ENCODE measurements at regions of chr11 and their contacts with region 1.

Region 1: GRCh38 chr11:33808228-33808828 is 34.0 kb upstream of the FBXO3 start:
- DNase-seq: peak; percentile 83
- H3K4me3 ChIP-seq: no peak overlapping the region
- H3K27ac ChIP-seq: no peak overlapping the region
- H3K4me1 ChIP-seq: peaks cover 9% of the 10 kb centered on the region
- H3K27me3 ChIP-seq: peaks cover 0 to 5% of the 10 kb centered on the region in 2 experiments
- CTCF ChIP-seq: peak; percentile 87 to 92
- POLR2A ChIP-seq: no peak

Region 2: GRCh38 chr11:33819278-33819677 is 10.9 kb after region 1 on chr11:
- CTCF ChIA-PET with region 1: interaction called, 11 read pairs
- POLR2A ChIA-PET with region 1: no interaction called
- dilution Hi-C with region 1: no loop called
- intact Hi-C with region 1: no loop called
- DNase-seq: no peak
- H3K4me3 ChIP-seq: no peak overlapping the region
- H3K27ac ChIP-seq: no peak overlapping the region
- H3K4me1 ChIP-seq: no peaks in the 10 kb centered on the region
- H3K27me3 ChIP-seq: peaks cover 22 to 24% of the 10 kb centered on the region in 2 experiments
- CTCF ChIP-seq: no peak
- POLR2A ChIP-seq: no peak

Region 3: GRCh38 chr11:33842236-33842915 is 34.0 kb after region 1 on chr11:
- CTCF ChIA-PET with region 1: interaction called, 14 read pairs
- POLR2A ChIA-PET with region 1: no interaction called
- dilution Hi-C with region 1: no loop called
- intact Hi-C with region 1: no loop called
- DNase-seq: no peak
- H3K4me3 ChIP-seq: no peak overlapping the region
- H3K27ac ChIP-seq: no peak overlapping the region
- H3K4me1 ChIP-seq: no peaks in the 10 kb centered on the region
- H3K27me3 ChIP-seq: peaks cover 24 to 27% of the 10 kb centered on the region in 2 experiments
- CTCF ChIP-seq: no peak
- POLR2A ChIP-seq: no peak

Region 4: DNA sequence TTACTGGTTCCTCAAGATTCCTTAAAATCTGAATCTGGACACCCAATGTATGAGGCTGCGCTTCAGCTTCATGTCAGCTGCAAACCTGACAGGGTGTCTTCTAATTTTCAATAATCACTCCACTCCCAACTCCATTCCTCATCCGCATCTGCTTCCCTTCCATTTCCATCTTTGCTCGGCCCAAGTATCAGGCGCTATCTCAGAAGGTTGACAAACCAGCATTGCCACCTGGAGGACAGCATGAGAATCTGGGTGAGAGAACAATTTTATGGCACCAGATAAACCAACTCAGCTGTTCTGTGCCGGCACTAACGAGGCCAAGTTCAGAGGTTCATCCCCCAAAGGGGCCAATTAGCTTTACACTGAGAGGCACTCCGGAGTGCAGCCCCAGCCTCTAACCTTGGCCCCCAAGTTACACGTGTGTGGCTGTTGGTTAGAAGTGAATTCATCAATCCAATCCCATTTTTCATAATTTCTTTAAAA is 162.7 kb after region 1 on chr11:
- CTCF ChIA-PET with region 1: interaction called, 35 read pairs
- POLR2A ChIA-PET with region 1: no interaction called
- dilution Hi-C with region 1: no loop called
- intact Hi-C with region 1: loop called (anchors 1 kb)
- DNase-seq: peak; percentile 72
- H3K4me3 ChIP-seq: no peak overlapping the region
- H3K27ac ChIP-seq: no peak overlapping the region
- H3K4me1 ChIP-seq: no peaks in the 10 kb centered on the region
- H3K27me3 ChIP-seq: peaks cover 0 to 4% of the 10 kb centered on the region in 2 experiments
- CTCF ChIP-seq: peak; percentile 70 to 74
- POLR2A ChIP-seq: no peak

Region 5: DNA sequence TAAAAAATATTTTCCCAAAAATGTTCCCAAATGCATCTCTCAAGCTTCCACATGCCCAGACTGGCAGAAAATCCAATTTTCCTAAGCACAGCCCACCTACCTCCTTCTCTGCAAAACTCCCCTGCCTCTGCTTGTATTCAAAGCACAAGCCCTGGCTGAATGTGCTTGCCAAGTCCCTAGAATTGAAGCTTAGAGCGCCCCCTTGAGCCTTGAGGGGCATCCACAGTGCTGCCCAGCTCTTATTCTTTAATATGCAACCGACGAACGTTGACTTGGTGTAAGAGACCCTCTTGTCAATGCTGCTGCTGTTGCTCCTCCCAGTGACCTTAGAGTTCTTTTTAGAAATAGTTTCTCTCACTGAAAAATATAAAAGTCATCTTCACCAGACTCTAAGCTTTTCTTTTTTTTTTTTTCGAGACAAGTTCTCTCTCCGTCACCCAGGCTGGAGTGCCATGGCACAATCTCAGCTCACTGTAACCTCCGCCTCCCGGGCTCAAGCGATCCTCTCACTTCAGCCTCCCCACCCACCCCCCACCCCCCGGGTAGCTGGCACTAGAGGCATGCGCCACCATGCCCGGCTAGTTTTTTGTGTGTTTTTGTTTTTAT is 179.8 kb after region 1 on chr11:
- CTCF ChIA-PET with region 1: interaction called, 129 read pairs
- POLR2A ChIA-PET with region 1: interaction called, 3 read pairs
- dilution Hi-C with region 1: no loop called
- intact Hi-C with region 1: loop called (anchors 1 kb)
- DNase-seq: peak; percentile 80
- H3K4me3 ChIP-seq: no peak overlapping the region
- H3K27ac ChIP-seq: no peak overlapping the region
- H3K4me1 ChIP-seq: no peaks in the 10 kb centered on the region
- H3K27me3 ChIP-seq: peaks cover 2 to 3% of the 10 kb centered on the region in 2 experiments
- CTCF ChIP-seq: peak; percentile 90 to 91
- POLR2A ChIP-seq: no peak

Region 6: GRCh38 chr11:34357701-34358257 is 549.5 kb after region 1 on chr11 and contains the start of gene ABTB2:
- CTCF ChIA-PET with region 1: interaction called, 5 read pairs
- POLR2A ChIA-PET with region 1: interaction called, 3 read pairs
- dilution Hi-C with region 1: no loop called
- intact Hi-C with region 1: loop called (anchors 1 kb)
- DNase-seq: peak; percentile 96
- H3K4me3 ChIP-seq: peak within 1 kb of the TSS in 2 of 3 experiments; percentile 26 to 29
- H3K27ac ChIP-seq: no peak within 1 kb of the TSS
- H3K4me1 ChIP-seq: peaks cover 14% of the 10 kb centered on the region
- H3K27me3 ChIP-seq: peaks cover 24 to 40% of the 10 kb centered on the region in 2 experiments
- CTCF ChIP-seq: no peak
- POLR2A ChIP-seq: peak; percentile 69
- total RNA-seq, gene ABTB2: 0.11 and 0.25 TPM in 2 replicates

Measured in endothelial cell of umbilical vein (primary cell).